BJ (cell line): ENCODE measurements at regions of chr10 and their contacts with region 1.

Region 1: GRCh38 chr10:114470956-114471905 is 66.9 kb upstream of the AFAP1L2 start:
- DNase-seq: no peak
- H3K4me3 ChIP-seq: no peak overlapping the region
- H3K27me3 ChIP-seq: no peaks in the 10 kb centered on the region
- CTCF ChIP-seq: peak; percentile 83

Region 2: GRCh38 chr10:114367041-114367818 is 104.0 kb before region 1 on chr10:
- CTCF ChIA-PET with region 1: no interaction called
- POLR2A ChIA-PET with region 1: no interaction called
- DNase-seq: no peak
- H3K4me3 ChIP-seq: no peak overlapping the region
- H3K27me3 ChIP-seq: peaks cover 2% of the 10 kb centered on the region; the same call in 1 of the 2 replicates
- CTCF ChIP-seq: no peak

Region 3: GRCh38 chr10:114437456-114438292 is 33.6 kb before region 1 on chr10:
- CTCF ChIA-PET with region 1: interaction called, 10 read pairs
- POLR2A ChIA-PET with region 1: no interaction called
- DNase-seq: no peak
- H3K4me3 ChIP-seq: no peak overlapping the region
- H3K27me3 ChIP-seq: no peaks in the 10 kb centered on the region
- CTCF ChIP-seq: peak; percentile 56

Region 4: GRCh38 chr10:114482480-114483304 is 11.5 kb after region 1 on chr10:
- CTCF ChIA-PET with region 1: interaction called, 11 read pairs
- POLR2A ChIA-PET with region 1: no interaction called
- DNase-seq: no peak
- H3K4me3 ChIP-seq: no peak overlapping the region
- H3K27me3 ChIP-seq: no peaks in the 10 kb centered on the region; the same call in 1 of the 2 replicates
- CTCF ChIP-seq: no peak

Region 5: GRCh38 chr10:114541081-114541796 is 70.0 kb after region 1 on chr10:
- CTCF ChIA-PET with region 1: interaction called, 12 read pairs
- POLR2A ChIA-PET with region 1: no interaction called
- DNase-seq: peak; percentile 86
- H3K4me3 ChIP-seq: no peak overlapping the region
- H3K27me3 ChIP-seq: no peaks in the 10 kb centered on the region
- CTCF ChIP-seq: no peak

Region 6: DNA sequence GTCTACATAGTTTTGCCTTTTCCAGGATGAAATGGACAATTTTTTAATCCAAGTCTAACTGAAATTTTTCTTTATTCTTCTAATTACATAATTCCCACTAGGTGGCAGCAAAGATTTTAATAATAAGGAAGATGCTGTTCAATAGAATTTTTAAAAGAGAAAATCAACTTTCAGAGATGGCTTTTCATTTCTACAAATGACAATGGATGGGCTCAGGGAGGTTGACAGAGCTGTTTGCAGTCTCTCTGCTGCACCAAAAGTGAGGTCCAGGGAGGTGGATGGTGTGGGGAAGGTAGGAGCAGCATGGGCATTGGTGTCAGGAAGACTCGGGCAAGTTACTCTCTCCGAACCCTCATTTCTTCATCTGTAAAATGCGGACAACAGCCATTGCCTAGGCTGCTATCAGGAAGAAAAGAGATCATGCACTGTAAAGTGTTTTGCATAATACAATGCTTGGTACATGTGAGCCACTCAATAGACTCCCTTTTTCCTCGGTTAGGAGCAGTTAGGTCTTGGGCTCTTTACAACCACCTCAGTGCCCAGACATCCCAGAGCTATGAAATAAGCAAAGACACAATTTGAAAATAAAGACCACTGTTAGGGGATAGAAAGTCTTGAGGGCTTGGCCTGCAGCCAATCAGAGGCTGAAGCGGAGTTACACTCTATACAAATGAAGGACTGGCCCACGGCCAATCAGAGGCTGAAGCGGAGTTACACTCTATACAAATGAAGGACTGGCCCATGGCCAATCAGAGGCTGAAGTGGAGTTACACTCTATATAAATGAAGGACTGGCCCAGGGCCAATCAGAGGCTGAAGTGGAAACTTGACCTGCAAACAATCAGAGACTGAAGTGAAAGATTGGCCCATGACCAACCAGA is 79.8 kb after region 1 on chr10:
- CTCF ChIA-PET with region 1: interaction called, 65 read pairs
- POLR2A ChIA-PET with region 1: no interaction called
- DNase-seq: no peak
- H3K4me3 ChIP-seq: no peak overlapping the region
- H3K27me3 ChIP-seq: no peaks in the 10 kb centered on the region
- CTCF ChIP-seq: peak; percentile 13; the same call in 1 of the 2 replicates

Region 7: DNA sequence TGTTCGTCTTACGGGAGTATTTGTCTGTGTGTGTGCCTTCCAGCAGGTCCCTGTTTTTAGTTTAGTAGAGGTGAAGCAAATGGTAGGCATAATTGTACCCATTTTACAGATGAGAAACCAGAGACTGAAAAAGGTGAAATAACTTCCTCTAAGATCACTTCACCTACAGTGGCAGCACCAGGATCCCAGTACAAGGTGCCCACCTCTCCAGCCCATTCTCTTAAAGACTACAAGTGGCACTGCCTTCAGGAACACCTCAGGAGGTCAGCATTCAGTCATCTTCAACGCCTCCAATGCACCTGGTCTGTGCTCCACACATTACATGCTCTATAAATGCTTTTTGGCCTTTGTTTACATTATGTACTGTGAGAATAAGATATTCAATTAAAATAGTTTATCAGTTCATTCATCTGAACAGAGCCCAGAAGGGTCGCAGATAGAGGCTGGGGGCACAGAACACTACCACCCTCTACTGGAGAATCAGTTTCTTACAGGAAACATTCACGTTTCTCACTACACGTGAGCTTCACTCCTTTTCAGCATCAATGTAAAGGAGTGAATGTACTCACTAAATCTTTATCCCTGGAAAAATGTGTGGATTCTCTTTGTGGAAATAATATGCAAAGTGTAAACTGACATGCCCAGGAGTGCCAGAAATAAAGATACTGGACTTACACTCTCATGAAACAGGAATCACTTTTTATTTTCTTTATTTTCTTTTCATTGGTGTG is 232.3 kb after region 1 on chr10:
- CTCF ChIA-PET with region 1: interaction called, 18 read pairs
- POLR2A ChIA-PET with region 1: no interaction called
- DNase-seq: no peak
- H3K4me3 ChIP-seq: no peak overlapping the region
- H3K27me3 ChIP-seq: no peaks in the 10 kb centered on the region
- CTCF ChIP-seq: peak; percentile 75

Region 8: DNA sequence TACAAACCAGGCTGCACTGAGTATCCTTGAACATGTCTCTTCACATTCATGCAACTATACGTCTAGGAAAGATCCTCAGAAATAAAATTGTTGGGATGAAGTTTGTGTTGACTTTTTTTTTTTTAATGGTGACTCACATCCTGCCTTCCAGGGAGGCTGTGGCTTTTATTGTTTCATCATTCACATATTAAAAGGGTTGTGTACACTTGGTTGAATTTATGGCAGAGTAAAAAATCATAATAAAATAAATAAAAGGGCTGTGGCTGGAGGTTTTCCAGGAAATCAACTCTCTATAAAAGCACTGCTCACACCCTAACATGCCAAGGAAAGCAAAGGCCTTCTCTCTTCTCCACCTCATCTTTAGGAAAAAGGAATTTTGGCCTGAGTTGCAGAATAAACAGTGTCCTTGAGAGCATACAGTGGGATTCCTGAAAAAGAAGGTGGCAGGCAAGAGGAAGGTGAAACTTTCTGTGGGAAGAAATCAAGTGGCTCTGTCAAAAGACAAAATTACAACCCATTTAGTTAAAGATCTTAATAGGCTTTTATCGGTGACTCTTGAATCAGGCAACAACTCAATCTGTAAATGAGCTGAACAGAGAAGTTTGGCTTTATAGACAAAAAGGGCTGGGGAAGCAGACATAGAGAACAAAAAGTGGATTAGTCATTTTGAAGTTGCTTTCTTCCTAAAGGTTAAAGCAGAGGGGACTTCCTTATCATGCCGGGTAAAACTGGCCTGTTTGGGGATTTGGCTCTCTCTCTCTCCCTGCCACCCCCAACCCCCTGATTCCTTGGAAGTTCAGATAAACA is 308.8 kb after region 1 on chr10:
- CTCF ChIA-PET with region 1: interaction called, 19 read pairs
- POLR2A ChIA-PET with region 1: no interaction called
- DNase-seq: peak; percentile 96
- H3K4me3 ChIP-seq: no peak overlapping the region
- H3K27me3 ChIP-seq: no peaks in the 10 kb centered on the region
- CTCF ChIP-seq: no peak